Activated B cell treated with CpG ODN at 0.5 μM for 24 hours (primary cell): ENCODE measurements at regions of chr18 and their contacts with region 1.

Region 1: DNA sequence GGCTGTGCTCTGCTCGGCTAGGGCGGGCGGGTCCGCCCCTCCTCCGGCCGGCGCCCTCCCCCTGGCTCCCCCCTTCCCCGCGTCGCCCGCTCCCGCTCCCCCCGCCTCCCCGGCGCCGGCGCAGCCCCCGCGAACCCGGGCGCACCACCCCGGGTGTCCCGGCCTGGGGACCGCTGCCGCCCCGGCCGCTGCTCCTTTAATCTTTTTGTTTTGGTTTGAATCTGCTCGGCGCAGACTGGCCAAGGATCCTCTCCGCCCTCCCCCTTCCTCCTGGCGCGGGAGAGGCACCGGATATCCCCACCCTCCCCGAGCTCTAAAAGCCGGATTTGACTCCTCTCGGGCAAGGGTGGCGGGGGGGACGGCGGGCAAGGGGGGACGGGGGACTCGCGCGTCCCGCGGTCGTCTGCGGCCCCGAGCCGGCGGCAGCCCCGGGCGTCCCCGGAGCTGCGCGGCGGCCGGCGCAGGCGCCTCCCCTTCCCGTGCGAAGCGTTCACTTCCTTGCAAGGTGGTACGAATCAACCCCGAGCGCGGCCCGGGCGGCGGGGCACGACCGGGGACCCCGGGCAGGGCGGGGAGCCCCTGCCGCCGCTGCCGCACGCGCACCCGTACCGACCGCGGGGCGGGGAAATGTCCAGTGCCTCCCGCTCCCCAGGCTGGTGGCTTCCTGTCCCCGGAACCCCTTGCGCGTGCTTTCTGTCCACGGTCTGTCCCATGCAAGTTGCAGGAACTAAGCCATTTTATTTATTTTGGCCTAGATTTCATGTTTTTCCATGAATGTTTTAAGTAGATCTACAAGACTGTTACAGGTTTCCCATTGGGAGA is at the start of gene PTGR3:
- DNase-seq: peak; percentile 68
- ATAC-seq: peak; percentile 66
- H3K4me3 Mint-ChIP-seq: peak within 1 kb of the TSS; percentile 91
- H3K27ac Mint-ChIP-seq: peak within 1 kb of the TSS; percentile 90
- H3K4me1 Mint-ChIP-seq: peaks cover 59% of the 10 kb centered on the region
- H3K27me3 Mint-ChIP-seq: peaks cover 6% of the 10 kb centered on the region
- CTCF ChIP-seq: no peak
- total RNA-seq, gene PTGR3: 19.0 and 19.3 TPM in 2 replicates

Region 2: GRCh38 chr18:74147779-74148542 is 1061.4 kb before region 1 on chr18 and contains the starts of genes FBXO15 and TIMM21:
- CTCF ChIA-PET with region 1: no interaction called
- POLR2A ChIA-PET with region 1: no interaction called
- intact Hi-C with region 1: loop called (anchors 1 kb)
- DNase-seq: peak; percentile 96
- ATAC-seq: peak; percentile 85
- H3K4me3 Mint-ChIP-seq: peak within 1 kb of the TSS; percentile 97
- H3K27ac Mint-ChIP-seq: peak within 1 kb of the TSS; percentile 99
- H3K4me1 Mint-ChIP-seq: peaks cover 48% of the 10 kb centered on the region
- H3K27me3 Mint-ChIP-seq: peaks cover 1% of the 10 kb centered on the region
- CTCF ChIP-seq: no peak
- total RNA-seq, gene FBXO15: 0.69 and 0.98 TPM in 2 replicates
- total RNA-seq, gene TIMM21: 23.3 and 27.0 TPM in 2 replicates

Region 3: GRCh38 chr18:74495581-74496507 is 713.5 kb before region 1 on chr18 and contains the start of gene CNDP2:
- CTCF ChIA-PET with region 1: no interaction called
- POLR2A ChIA-PET with region 1: interaction called, 4 read pairs
- intact Hi-C with region 1: loop called (anchors 1 kb)
- DNase-seq: peak; percentile 99
- ATAC-seq: peak; percentile 81
- H3K4me3 Mint-ChIP-seq: peak within 1 kb of the TSS; percentile 99
- H3K27ac Mint-ChIP-seq: peak within 1 kb of the TSS; percentile 98
- H3K4me1 Mint-ChIP-seq: peaks cover 46% of the 10 kb centered on the region
- H3K27me3 Mint-ChIP-seq: no peaks in the 10 kb centered on the region
- CTCF ChIP-seq: no peak
- total RNA-seq, gene CNDP2: 193 and 208 TPM in 2 replicates

Region 4: DNA sequence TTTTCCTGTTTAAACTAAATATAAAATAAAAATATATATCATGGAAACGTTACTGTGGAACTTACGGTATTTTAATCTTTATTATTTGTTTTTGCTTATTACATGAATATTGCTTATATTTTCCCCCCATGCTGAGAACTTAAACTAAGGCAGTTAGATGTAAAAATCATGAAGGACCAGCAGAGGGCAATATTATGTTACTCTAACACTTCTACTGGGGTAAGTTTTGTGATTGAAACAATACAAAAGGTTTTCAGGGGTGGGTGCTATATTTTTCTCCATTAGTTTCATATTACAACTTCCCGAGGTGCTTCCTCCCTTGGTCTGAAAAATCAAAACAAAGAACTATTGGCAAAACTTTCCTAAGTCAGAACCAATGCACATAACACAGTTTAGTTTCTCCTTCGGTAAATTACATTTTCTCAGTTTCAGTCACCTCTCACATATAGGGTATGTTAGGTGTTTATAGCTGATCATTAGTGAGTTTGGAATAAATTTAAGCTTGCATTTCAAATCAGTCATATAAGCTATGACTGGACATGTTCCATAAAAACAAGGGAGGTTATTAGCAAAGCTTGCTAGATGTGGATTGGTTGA is 556.9 kb before region 1 on chr18:
- CTCF ChIA-PET with region 1: no interaction called
- POLR2A ChIA-PET with region 1: no interaction called
- intact Hi-C with region 1: loop called (anchors 10 kb)
- DNase-seq: no peak
- ATAC-seq: no peak
- H3K4me3 Mint-ChIP-seq: no peak overlapping the region
- H3K27ac Mint-ChIP-seq: no peak overlapping the region
- H3K4me1 Mint-ChIP-seq: no peaks in the 10 kb centered on the region
- H3K27me3 Mint-ChIP-seq: no peaks in the 10 kb centered on the region
- CTCF ChIP-seq: no peak

Region 5: GRCh38 chr18:75070625-75071483 is 138.5 kb before region 1 on chr18:
- CTCF ChIA-PET with region 1: no interaction called
- POLR2A ChIA-PET with region 1: interaction called, 4 read pairs
- intact Hi-C with region 1: loop called (anchors 1 kb)
- DNase-seq: peak; percentile 35
- ATAC-seq: peak; percentile 86
- H3K4me3 Mint-ChIP-seq: peak overlapping the region; percentile 82
- H3K27ac Mint-ChIP-seq: peak overlapping the region; percentile 89
- H3K4me1 Mint-ChIP-seq: peaks cover 32% of the 10 kb centered on the region
- H3K27me3 Mint-ChIP-seq: no peaks in the 10 kb centered on the region
- CTCF ChIP-seq: no peak

Region 6: DNA sequence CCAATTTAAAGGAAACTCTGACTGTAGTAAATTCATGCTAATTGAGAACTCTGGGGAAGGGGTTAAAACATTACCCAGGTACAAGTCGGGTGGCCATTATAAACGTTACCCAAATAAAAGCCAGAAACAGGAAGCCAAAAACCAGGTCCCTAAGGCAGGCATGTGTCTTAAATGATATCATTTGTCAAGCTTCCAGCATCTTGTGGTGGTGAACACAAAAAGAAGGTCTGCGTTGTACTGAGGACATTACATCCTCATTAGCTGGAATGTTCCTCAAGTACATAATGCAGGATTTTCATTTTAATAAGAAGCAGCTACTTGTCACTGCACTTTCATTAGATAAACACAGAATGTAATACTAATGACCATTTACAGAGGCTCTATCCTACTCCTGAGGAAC is 11.3 kb before region 1 on chr18:
- CTCF ChIA-PET with region 1: no interaction called
- POLR2A ChIA-PET with region 1: interaction called, 14 read pairs
- intact Hi-C with region 1: no loop called
- DNase-seq: no peak
- ATAC-seq: no peak
- H3K4me3 Mint-ChIP-seq: no peak overlapping the region
- H3K27ac Mint-ChIP-seq: no peak overlapping the region
- H3K4me1 Mint-ChIP-seq: no peaks in the 10 kb centered on the region
- H3K27me3 Mint-ChIP-seq: no peaks in the 10 kb centered on the region
- CTCF ChIP-seq: no peak

Region 7: DNA sequence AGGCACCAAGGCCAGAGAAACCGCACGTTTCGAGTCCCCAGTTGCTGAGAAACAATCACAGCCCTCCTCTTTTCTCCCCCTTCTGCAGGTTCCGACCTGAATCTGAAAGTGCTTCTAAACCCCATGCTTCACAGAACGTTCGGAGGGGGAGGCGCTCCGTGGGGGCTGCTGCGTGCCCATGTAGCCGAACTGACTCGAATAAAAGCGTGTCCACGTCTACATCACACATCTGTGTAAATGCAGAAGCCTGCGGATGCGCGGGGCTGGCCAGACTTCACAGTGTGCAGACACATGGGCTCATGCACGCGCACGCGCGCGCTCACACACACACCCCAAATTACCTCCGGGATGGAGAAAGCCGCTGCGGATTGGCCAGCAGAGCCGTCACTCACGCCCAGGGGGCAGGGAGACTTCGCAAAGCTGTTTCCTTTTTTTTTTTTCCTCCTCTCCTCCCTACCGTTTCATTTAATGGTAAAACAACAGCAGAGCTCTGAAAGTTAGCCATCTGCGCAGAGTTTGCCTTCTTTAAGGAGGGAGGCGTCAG is 1283.4 kb after region 1 on chr18:
- CTCF ChIA-PET with region 1: no interaction called
- POLR2A ChIA-PET with region 1: interaction called, 3 read pairs
- intact Hi-C with region 1: loop called (anchors 5 kb)
- DNase-seq: peak; percentile 98
- ATAC-seq: peak; percentile 73
- H3K4me3 Mint-ChIP-seq: peak overlapping the region; percentile 91
- H3K27ac Mint-ChIP-seq: peak overlapping the region; percentile 88
- H3K4me1 Mint-ChIP-seq: peaks cover 36% of the 10 kb centered on the region
- H3K27me3 Mint-ChIP-seq: peaks cover 16% of the 10 kb centered on the region
- CTCF ChIP-seq: no peak